ENCODE measurements at regions of chr3 and their contacts with region 1.

Region 1: DNA sequence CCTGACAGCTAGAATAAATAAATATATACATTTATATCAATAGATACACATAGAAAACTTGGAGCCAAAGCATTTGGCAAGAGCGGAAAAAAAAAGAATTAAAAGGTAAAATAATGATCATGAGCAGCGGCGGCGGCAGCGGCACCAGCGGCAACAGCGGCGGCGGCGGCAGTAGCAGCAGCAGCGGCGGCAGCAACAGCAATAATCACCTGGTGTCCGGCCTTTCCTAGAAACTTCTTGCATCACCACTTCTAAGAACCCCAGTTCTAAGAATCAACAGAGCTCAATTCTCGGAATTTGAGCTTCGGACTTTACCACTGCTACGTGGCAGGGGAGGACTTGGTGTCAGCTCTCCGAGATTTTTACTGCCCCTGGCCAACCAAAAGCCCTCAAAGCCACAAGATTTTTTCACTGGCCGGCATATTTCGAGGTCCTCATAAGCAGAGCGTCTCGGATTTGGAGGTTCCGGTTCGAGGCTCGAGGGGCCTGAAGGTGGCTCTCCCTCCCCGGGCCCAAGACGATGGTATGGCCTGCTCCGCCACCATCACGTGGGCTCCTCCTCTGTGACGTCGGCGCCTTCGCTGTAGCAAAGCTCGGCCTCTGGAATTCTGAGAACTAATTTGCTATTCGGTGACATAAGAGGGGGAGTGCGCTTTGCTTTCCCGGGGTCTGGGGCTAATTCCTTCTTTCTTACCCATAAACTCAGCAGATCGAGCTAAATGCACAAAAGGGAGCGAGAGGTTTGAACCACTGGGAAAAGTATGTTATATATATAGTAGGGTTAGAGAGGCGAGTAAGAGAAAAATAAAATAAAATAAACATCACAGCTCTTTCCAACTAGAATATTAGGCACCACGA is at the start of gene BCL6:
- DNase-seq: peak; percentile 89 to 94
- ATAC-seq: peak; percentile 70 to 82 (median 80)
- H3K4me3 ChIP-seq: peak within 1 kb of the TSS; percentile 60 to 95 (median 74)
- H3K27ac ChIP-seq: peak within 1 kb of the TSS; percentile 85 to 100 (median 99)
- H3K4me1 ChIP-seq: peaks cover 3 to 51% (median 19%) of the 10 kb centered on the region in 9 donors
- H3K27me3 ChIP-seq: no peaks in the 10 kb centered on the region
- CTCF ChIP-seq: peak in 2 of 9 donors; percentile 6 to 22
- total RNA-seq, gene BCL6: 27.9 to 154 (median 51.7) TPM

Region 2: DNA sequence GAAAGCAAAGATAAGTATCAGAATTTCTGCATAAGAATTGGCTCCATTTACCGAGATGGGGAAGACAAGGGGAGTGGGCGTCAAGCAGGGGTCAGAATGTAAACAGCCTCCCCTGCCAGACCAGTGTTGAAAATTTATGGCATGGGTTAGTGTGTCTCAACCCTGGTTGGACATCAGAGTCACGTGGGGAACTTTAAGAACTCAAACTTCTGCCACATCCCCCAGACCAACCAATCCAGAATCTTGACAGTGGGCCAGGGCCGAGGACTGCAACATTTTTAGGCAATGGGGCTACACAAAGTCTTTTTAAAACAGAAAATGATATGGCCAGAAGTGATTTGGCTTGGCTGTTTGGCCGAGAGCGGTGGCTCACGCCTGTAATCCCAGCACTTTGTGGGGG is 439.5 kb before region 1 on chr3:
- intact Hi-C with region 1: no loop called
- DNase-seq: no peak
- ATAC-seq: no peak
- H3K4me3 ChIP-seq: no peak overlapping the region
- H3K27ac ChIP-seq: no peak overlapping the region
- H3K4me1 ChIP-seq: no peaks in the 10 kb centered on the region
- H3K27me3 ChIP-seq: peaks cover 0 to 2% (median 0%) of the 10 kb centered on the region in 7 donors
- CTCF ChIP-seq: no peak

Region 3: DNA sequence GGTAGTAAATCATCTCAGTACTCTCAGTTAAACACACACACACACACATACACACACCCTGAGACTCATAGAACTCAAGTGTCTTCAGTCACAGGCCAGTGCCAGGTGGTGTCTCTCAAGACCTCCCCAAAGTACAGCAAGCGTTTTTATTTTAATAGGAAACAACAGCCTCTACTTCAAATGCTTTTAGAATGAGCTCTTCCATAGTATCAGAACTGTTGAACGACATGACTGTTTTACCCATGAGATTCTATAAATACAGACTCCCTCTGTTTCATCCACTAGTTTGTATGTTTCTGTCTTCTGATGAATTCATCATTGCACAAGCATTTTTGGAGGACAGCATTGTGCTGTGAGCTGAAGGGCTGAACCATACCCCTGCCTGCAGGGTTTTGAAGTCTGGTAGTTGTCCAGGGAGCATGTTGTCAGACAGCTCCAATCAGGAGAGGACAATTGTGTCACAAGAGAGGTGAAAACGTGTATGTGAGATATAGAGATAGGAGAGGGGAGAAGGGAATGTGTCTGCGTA is 200.8 kb after region 1 on chr3:
- intact Hi-C with region 1: loop called in 2 of 10 experiments (anchors 5 to 10 kb)
- DNase-seq: no peak
- ATAC-seq: peak in 2 of 8 donors; percentile 7 to 11
- H3K4me3 ChIP-seq: no peak overlapping the region
- H3K27ac ChIP-seq: peak overlapping the region in 8 of 10 donors; percentile 11 to 91 (median 86)
- H3K4me1 ChIP-seq: peaks cover 5 to 53% (median 28%) of the 10 kb centered on the region in 9 donors
- H3K27me3 ChIP-seq: no peaks in the 10 kb centered on the region
- CTCF ChIP-seq: no peak

Region 4: GRCh38 chr3:187968883-187969580 is 223.6 kb after region 1 on chr3:
- intact Hi-C with region 1: loop called in 3 of 10 experiments (anchors 5 kb)
- DNase-seq: no peak
- ATAC-seq: peak in 2 of 8 donors; percentile 5 to 63
- H3K4me3 ChIP-seq: no peak overlapping the region
- H3K27ac ChIP-seq: peak overlapping the region in 2 of 10 donors; percentile 6 to 71
- H3K4me1 ChIP-seq: peaks cover 0 to 49% (median 9%) of the 10 kb centered on the region in 9 donors
- H3K27me3 ChIP-seq: no peaks in the 10 kb centered on the region
- CTCF ChIP-seq: no peak

Region 5: DNA sequence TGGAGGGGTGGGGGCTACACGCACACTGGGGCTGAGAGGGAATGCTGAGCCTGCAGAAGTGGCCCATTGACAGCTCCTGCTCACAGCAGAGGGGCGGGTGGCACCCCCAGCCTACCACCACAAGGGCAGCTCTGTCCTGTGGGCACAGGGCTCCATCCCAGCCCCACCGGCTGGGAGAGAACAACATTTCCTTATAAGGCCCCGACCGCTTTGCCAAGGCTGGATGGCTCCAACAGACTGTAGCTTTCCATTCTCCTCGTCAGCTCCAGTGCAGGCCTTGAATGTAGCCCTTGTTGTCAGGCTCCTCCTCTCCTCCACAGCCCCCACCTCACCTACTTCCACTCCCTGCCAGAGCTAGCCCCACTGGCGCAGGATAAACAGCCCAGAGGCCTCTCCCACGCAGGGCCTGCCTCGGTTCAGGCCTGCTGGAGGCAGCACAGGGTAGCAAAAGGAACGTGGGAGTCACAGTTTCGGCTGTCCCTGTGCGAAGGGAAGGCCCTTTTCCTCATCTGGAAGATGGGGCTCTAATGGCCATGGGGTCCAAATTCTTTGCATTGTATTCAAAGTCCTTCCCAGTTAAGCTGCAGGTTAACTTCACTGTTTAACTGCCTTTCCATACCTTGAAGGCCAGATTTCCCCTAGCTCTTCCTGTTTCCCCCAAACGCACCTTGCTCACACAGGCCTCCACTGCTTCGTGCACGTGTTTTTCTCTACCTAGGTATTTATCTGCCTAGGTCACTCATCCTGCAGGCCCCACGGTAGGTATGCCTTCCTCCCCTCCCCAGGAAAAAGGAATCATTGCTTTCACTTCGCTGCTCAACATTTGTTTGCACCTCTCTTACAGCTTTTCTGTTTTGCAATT is 307.0 kb after region 1 on chr3:
- intact Hi-C with region 1: loop called in 7 of 10 experiments (anchors 5 to 10 kb)
- DNase-seq: peak; percentile 81 to 89
- ATAC-seq: peak; percentile 96 to 98 (median 97)
- H3K4me3 ChIP-seq: peak overlapping the region in 6 of 10 donors; percentile 3 to 34 (median 23)
- H3K27ac ChIP-seq: peak overlapping the region; percentile 66 to 89 (median 76)
- H3K4me1 ChIP-seq: peaks cover 6 to 34% (median 21%) of the 10 kb centered on the region in 9 donors
- H3K27me3 ChIP-seq: no peaks in the 10 kb centered on the region
- CTCF ChIP-seq: peak in 8 of 9 donors; percentile 26 to 77 (median 56)

Region 6: GRCh38 chr3:188270423-188270972 is 525.1 kb after region 1 on chr3:
- intact Hi-C with region 1: loop called in 8 of 10 experiments (anchors 5 to 10 kb)
- DNase-seq: no peak
- ATAC-seq: peak in 5 of 8 donors; percentile 23 to 54 (median 46)
- H3K4me3 ChIP-seq: peak overlapping the region in 1 of 10 donors; percentile 1
- H3K27ac ChIP-seq: peak overlapping the region; percentile 45 to 93 (median 74)
- H3K4me1 ChIP-seq: peaks cover 14 to 92% (median 71%) of the 10 kb centered on the region in 9 donors
- H3K27me3 ChIP-seq: no peaks in the 10 kb centered on the region
- CTCF ChIP-seq: no peak

Region 7: DNA sequence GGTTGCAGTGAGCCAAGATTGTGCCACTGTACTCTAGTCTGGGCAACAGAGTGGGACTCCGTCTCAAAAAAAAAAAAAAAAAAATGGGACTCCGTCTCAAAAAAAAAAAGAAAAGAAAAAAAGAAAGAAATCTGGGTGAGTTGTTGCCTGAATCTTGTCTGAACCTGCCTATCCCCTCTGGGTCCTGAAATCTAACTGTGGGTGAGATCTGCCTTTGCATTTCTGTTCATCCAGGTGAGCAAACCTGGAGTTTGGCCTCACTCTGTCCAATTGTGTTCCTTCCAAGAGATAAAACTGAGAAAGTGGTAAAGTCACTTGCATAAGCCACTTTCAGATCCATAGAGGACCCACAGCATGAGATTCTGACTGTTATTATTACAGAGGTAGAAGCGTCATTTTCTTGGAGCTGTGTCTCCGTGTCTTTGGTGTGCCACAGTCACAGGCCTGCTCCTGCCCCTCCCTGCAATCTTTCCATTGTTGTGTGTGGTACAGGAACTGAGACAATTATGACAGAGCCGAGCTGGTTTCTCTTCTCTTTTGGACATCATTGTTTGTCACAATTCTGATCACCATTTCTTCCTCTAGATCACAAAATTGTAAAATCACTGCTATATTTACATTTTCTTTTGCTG is 644.4 kb after region 1 on chr3:
- intact Hi-C with region 1: loop called in 1 of 10 experiments (anchors 10 kb)
- DNase-seq: peak in 1 of 2 donors; percentile 56
- ATAC-seq: peak; percentile 78 to 93 (median 89)
- H3K4me3 ChIP-seq: no peak overlapping the region
- H3K27ac ChIP-seq: peak overlapping the region in 7 of 10 donors; percentile 36 to 67 (median 62)
- H3K4me1 ChIP-seq: peaks cover 0 to 45% (median 37%) of the 10 kb centered on the region in 9 donors
- H3K27me3 ChIP-seq: no peaks in the 10 kb centered on the region
- CTCF ChIP-seq: no peak

Region 8: DNA sequence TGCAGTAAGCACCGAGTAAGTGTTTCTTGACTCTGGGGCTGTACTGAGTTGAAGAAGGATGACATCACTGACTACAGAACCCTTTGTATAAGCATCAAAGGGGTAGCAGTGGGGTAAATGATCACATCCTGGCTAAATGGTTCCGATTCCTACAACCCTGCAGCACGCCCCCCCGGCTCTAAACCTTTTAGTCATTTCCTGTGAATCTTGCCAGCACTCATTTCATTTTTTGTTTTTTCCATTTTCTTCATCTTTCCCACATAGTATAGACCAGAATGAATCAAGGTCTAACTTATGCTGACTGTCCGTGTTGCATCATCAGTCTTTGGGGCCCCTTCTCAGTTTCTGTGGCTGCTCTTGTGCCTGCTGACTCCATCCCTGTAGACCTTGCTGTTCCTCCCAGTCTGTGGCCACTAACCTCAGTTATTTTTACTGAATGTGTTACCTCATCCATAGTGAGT is 1043.2 kb after region 1 on chr3:
- intact Hi-C with region 1: loop called in 1 of 10 experiments (anchors 10 kb)
- DNase-seq: no peak
- ATAC-seq: peak in 3 of 8 donors; percentile 24 to 66 (median 27)
- H3K4me3 ChIP-seq: no peak overlapping the region
- H3K27ac ChIP-seq: peak overlapping the region in 1 of 10 donors; percentile 62
- H3K4me1 ChIP-seq: peaks cover 0 to 27% (median 7%) of the 10 kb centered on the region in 9 donors
- H3K27me3 ChIP-seq: no peaks in the 10 kb centered on the region
- CTCF ChIP-seq: no peak

Region 9: DNA sequence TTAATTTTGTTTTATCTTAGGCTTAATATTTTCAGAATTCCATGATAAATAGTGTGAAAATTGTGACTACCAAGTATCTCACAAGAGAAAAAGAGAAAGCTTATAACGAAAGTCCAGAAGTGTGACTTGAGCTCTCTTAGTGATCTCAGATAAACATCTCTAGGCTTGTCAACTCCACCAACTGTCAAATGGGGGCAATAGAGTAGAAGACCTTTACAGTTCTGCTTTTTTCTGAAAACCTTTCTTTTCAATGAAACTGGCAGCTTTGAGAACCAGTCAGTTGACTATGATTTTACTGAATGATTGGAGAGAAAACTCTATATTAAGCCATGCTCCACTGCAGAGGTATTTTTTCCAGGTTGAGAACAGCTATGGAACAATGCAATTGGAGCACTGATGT is 1766.6 kb after region 1 on chr3:
- intact Hi-C with region 1: no loop called
- DNase-seq: no peak
- ATAC-seq: no peak
- H3K4me3 ChIP-seq: no peak overlapping the region
- H3K27ac ChIP-seq: no peak overlapping the region
- H3K4me1 ChIP-seq: no peaks in the 10 kb centered on the region
- H3K27me3 ChIP-seq: peaks cover 0 to 4% (median 0%) of the 10 kb centered on the region in 7 donors
- CTCF ChIP-seq: no peak

Measured in heart right ventricle (tissue), 16 donors.